Psoas muscle (tissue), 8 donors: ENCODE measurements at regions of chr2 and their contacts with region 1.

Region 1: GRCh38 chr2:165401285-165401852 is 68.1 kb upstream of the CSRNP3 start:
- DNase-seq: no peak
- ATAC-seq: peak in 1 of 4 donors; percentile 54
- H3K4me3 ChIP-seq: no peak overlapping the region
- H3K27ac ChIP-seq: no peak overlapping the region
- H3K4me1 ChIP-seq: no peaks in the 10 kb centered on the region
- H3K27me3 ChIP-seq: no peaks in the 10 kb centered on the region
- CTCF ChIP-seq: peak; percentile 63

Region 2: GRCh38 chr2:165698444-165698894 is 297.1 kb after region 1 on chr2:
- intact Hi-C with region 1: loop called in 1 of 2 experiments (anchors 5 kb)
- DNase-seq: no peak
- ATAC-seq: no peak
- H3K4me3 ChIP-seq: no peak overlapping the region
- H3K27ac ChIP-seq: no peak overlapping the region
- H3K4me1 ChIP-seq: no peaks in the 10 kb centered on the region
- H3K27me3 ChIP-seq: no peaks in the 10 kb centered on the region
- CTCF ChIP-seq: peak; percentile 20

Region 3: DNA sequence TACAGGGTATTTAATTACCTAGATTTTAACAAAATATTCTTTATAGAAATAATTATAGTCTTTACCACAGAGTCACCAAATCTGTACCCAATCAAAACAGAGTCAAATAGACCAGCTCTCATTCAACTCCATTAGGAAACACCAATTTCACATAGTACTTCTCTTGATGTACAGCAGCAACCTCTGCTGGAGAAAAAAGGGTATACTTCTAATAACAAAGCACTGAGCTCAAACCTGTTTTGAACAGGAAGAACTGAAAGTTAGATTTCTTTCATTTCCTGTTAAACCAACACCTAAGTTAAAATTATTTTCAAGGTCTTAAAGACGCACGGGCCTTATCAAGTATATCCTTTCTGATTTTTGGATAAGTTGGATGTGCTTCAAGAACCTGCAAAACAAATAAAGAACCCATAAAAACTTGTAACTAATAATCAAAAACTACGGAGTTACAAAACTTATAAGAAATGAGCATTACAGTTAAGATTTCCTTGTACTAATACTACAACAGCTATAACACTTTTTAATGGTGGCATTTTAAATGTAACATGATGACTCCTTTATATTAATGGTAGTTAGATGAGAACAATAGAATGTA is 473.2 kb after region 1 on chr2:
- intact Hi-C with region 1: loop called in 1 of 2 experiments (anchors 5 kb)
- DNase-seq: no peak
- ATAC-seq: peak in 1 of 4 donors; percentile 56
- H3K4me3 ChIP-seq: no peak overlapping the region
- H3K27ac ChIP-seq: no peak overlapping the region
- H3K4me1 ChIP-seq: no peaks in the 10 kb centered on the region
- H3K27me3 ChIP-seq: no peaks in the 10 kb centered on the region
- CTCF ChIP-seq: peak; percentile 49